A549 (cell line): ENCODE measurements at regions of chr10 and their contacts with region 1.

Region 1: DNA sequence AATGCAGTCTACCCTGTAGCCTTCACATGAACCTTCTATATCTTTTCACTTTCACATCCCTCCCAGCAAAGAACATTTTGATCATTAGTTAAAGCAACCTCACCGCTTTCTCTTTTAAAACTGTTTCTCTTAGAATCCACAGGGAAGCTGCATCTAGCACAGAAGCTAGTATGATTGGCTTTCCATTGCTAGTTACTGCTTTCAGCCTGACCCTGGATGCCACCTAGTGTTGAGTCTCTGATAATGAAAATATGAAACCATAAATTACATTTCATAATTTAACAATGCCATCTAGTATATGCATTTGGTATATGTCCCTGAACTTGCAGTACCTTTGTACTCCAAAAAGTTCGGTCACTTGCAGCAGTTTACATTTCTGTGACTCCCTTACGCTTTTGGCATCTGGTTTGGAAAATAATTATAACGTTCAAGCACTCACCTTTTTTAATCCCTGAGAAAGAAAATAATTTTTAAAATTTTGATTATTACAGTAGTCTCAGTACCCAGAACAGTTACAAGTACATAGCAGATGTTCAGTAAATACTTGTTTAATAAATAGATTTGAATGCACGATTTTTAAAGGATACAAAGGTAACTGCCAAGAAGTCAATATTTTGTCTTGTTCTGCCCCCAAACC is 22.7 kb downstream of the CISD1 start:
- DNase-seq: peak; percentile 15 to 66
- ATAC-seq: peak; percentile 83 to 92
- H3K4me3 ChIP-seq: no peak overlapping the region
- H3K27ac ChIP-seq: no peak overlapping the region
- H3K4me1 ChIP-seq: no peaks in the 10 kb centered on the region
- CTCF ChIP-seq: peak; percentile 97
- EP300 ChIP-seq: no peak
- POLR2A ChIP-seq: no peak
- RAD21 ChIP-seq: peak; percentile 93 to 95

Region 2: DNA sequence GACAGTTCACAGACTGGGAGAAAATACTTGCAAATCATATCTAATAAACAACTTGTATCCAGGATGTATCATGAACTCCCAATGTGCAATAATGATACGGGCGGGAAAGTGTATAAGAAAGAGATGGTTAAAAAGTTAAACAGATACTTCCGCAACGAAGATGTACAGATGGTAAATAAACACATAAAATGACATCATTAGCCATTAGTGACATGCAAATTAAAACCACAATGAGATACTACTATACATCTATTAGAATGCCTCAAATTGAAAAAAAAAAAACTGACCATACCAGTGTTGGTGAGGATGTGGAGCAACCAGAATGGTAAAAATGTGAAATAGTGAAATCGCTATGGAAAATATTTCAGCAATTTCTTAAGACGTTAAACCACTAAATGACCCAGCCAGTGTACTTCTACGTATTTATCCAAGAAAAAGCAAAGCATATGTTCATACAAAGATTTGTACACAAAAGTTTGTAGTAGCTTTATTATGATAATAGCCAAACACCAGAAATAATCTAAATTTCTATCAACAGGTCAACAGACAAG is 107.5 kb before region 1 on chr10:
- CTCF ChIA-PET with region 1: interaction called, 221 read pairs
- POLR2A ChIA-PET with region 1: no interaction called
- DNase-seq: no peak
- ATAC-seq: no peak
- H3K4me3 ChIP-seq: no peak overlapping the region
- H3K27ac ChIP-seq: no peak overlapping the region
- H3K4me1 ChIP-seq: peaks cover 15% of the 10 kb centered on the region; the same call in 2 of the 3 replicates
- CTCF ChIP-seq: no peak
- EP300 ChIP-seq: no peak
- POLR2A ChIP-seq: no peak
- RAD21 ChIP-seq: no peak

Region 3: GRCh38 chr10:58237014-58237830 is 54.4 kb before region 1 on chr10:
- CTCF ChIA-PET with region 1: no interaction called
- POLR2A ChIA-PET with region 1: interaction called, 15 read pairs
- DNase-seq: peak; percentile 70 to 76
- ATAC-seq: peak; percentile 98
- H3K4me3 ChIP-seq: no peak overlapping the region
- H3K27ac ChIP-seq: peak overlapping the region; percentile 51 to 73
- H3K4me1 ChIP-seq: peaks cover 56% of the 10 kb centered on the region
- CTCF ChIP-seq: no peak
- EP300 ChIP-seq: no peak
- POLR2A ChIP-seq: no peak
- RAD21 ChIP-seq: no peak; a peak in 1 of 5 replicates

Region 4: DNA sequence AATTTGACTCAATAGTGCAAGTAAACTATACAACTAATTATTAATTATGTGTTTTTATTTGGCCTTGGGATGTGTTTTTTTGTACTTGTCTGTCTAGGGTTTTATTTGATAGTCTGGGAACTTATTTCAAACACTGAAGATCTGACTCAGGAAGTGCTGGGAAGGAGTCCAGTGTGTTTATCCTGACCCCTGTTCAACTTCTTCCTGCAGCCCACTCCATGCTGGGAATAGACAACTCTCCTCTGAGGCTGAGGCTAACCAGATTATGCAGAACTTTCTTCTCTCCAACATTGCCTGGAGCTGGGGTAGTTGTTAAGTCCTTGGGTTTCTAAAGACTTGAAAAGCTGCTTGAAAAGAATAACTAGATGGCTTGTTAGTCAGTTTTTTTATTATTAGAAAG is 15.7 kb before region 1 on chr10:
- CTCF ChIA-PET with region 1: interaction called, 17 read pairs
- POLR2A ChIA-PET with region 1: no interaction called
- DNase-seq: no peak
- ATAC-seq: no peak
- H3K4me3 ChIP-seq: no peak overlapping the region
- H3K27ac ChIP-seq: no peak overlapping the region
- H3K4me1 ChIP-seq: peaks cover 39% of the 10 kb centered on the region
- CTCF ChIP-seq: no peak
- EP300 ChIP-seq: no peak
- POLR2A ChIP-seq: no peak
- RAD21 ChIP-seq: no peak

Region 5: DNA sequence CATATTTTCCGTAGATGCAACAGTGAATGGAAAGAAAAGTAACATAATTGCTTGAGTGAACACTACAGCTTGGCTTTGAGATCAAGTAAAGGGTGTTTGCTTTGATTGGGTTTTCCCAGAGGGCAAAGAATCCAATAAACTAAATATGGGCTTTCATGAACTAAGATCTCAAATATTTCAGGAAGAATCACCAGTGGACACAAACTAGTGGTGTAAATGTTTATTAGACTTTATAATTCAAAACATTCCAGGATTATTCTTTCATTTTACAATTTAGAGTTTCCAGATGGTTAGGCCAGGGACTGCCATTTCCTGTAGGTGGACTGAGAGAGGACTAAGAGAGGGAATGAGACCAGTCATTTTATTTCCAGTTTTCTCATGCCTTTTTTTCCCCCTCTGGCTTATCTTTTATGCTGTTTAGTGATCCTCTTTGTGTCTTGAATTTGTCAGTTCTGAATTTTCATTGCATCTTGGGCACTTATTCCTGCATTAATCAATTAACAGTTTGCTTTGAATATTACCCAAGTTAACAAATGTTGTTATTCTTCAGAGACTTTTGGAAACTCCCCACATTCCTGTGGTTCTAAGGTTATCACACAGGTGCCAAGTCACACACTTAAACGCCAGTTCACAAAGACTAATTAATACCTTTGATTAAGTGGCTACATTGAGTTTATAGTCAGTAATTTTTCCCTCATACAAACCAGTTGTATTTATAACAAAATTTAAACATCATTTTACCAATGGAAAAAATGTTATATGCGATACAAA is 10.5 kb before region 1 on chr10:
- CTCF ChIA-PET with region 1: interaction called, 17 read pairs
- POLR2A ChIA-PET with region 1: no interaction called
- DNase-seq: no peak
- ATAC-seq: no peak
- H3K4me3 ChIP-seq: no peak overlapping the region
- H3K27ac ChIP-seq: no peak overlapping the region
- H3K4me1 ChIP-seq: peaks cover 24% of the 10 kb centered on the region; the same call in 2 of the 3 replicates
- CTCF ChIP-seq: no peak
- EP300 ChIP-seq: no peak
- POLR2A ChIP-seq: no peak
- RAD21 ChIP-seq: no peak

Region 6: GRCh38 chr10:58311026-58311425 is 19.4 kb after region 1 on chr10:
- CTCF ChIA-PET with region 1: interaction called, 14 read pairs
- POLR2A ChIA-PET with region 1: no interaction called
- DNase-seq: no peak
- ATAC-seq: no peak
- H3K4me3 ChIP-seq: no peak overlapping the region
- H3K27ac ChIP-seq: no peak overlapping the region
- H3K4me1 ChIP-seq: no peaks in the 10 kb centered on the region
- CTCF ChIP-seq: no peak
- EP300 ChIP-seq: no peak
- POLR2A ChIP-seq: no peak
- RAD21 ChIP-seq: no peak

Region 7: GRCh38 chr10:58486821-58487220 is 195.2 kb after region 1 on chr10:
- CTCF ChIA-PET with region 1: no interaction called
- POLR2A ChIA-PET with region 1: no interaction called
- DNase-seq: no peak
- ATAC-seq: no peak
- H3K4me3 ChIP-seq: no peak overlapping the region
- H3K27ac ChIP-seq: no peak overlapping the region
- H3K4me1 ChIP-seq: no peaks in the 10 kb centered on the region
- CTCF ChIP-seq: no peak
- EP300 ChIP-seq: no peak
- POLR2A ChIP-seq: no peak
- RAD21 ChIP-seq: no peak